Activated T-helper 1 cell treated with anti-CD3 and anti-CD28 coated beads, Interleukin-12 subunit alpha, Interleukin-12 subunit beta, Interleukin-2, Interleukin-4 antibody, amounts not matched to agents 30 ng/mL and 10 ng/mL and 1 ng/mL, durations not matched to agents 14 hours and 24 hours and 36 hours (primary cell): ENCODE measurements at regions of chr20 and their contacts with region 1.

Region 1: DNA sequence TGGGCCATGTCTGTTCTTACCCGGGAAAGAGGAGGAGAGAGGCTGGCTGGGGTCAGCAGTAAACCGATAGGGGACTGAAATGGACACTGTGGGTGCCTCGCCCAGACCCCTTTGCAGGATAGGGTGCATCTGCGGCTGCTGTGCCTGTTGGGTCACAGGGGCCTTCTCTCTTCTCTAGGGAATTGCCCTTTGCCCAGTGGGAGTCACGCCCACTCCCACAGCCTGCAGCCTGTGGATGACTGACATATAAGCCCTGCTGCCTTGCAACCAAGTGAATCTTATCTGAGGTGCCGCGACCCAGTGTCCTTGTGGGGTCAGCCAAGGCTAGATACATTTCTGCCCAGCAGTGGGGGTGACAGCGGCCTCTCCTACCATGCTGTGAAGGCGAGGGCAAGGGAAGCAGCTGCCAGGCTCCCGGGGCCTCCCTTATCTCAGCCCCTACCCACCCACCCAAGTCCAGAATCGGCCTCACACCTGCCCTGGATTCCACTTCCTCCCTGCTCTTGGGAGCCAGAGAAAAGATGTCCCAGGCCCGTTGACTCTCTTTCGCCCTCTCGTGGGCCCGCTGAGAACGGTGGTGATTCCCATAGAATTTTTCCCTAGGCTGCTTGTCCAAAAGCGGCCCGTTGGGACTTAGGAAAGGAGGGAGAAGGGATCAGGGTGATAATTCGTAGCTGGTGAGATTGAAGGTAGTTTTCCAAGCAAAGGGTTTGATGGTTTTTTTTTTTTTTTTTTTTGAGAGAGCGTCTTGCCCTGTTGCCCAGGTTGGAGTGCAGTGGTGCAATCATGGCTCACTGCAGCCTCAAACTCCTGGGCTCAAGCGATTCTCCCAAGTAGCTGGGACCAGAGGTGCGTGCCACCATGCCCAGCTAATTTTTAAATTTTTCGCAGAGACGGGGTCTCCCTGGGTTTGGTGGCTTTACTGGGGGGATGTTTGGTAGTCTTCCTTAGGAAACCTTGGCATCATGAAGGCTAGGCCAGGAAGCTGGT is 76.4 kb upstream of the RNF24 start:
- DNase-seq: peak; percentile 34
- H3K4me3 Mint-ChIP-seq: no peak overlapping the region
- H3K27ac Mint-ChIP-seq: no peak overlapping the region
- H3K4me1 Mint-ChIP-seq: peaks cover 10% of the 10 kb centered on the region
- H3K27me3 Mint-ChIP-seq: peaks cover 14% of the 10 kb centered on the region

Region 2: DNA sequence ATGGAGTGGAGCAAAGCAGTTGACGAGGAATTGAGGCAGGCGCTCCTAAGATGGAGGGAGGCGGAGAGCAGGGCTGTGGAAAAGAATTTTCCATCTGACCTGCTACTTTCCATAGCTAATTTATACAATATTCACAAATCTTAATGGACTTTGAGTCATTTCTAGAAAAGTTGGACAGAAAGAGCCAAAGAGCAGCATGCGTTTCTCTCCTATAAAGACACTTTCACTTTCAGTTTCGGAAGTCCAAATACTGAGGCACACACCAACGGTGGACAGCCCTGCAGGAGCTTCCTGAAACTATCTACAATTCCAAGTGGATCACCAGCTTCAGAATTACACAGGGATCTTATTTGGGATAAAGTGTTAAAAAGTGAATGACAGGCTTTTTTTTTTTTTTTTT is 159.1 kb before region 1 on chr20:
- intact Hi-C with region 1: no loop called
- DNase-seq: no peak
- H3K4me3 Mint-ChIP-seq: peak overlapping the region; percentile 26
- H3K27ac Mint-ChIP-seq: peak overlapping the region; percentile 44
- H3K4me1 Mint-ChIP-seq: peaks cover 30% of the 10 kb centered on the region
- H3K27me3 Mint-ChIP-seq: no peaks in the 10 kb centered on the region

Region 3: GRCh38 chr20:3997446-3997845 is 94.3 kb before region 1 on chr20:
- intact Hi-C with region 1: no loop called
- DNase-seq: no peak
- H3K4me3 Mint-ChIP-seq: no peak overlapping the region
- H3K27ac Mint-ChIP-seq: no peak overlapping the region
- H3K4me1 Mint-ChIP-seq: peaks cover 51% of the 10 kb centered on the region
- H3K27me3 Mint-ChIP-seq: no peaks in the 10 kb centered on the region

Region 4: GRCh38 chr20:4014031-4014474 is 77.7 kb before region 1 on chr20:
- intact Hi-C with region 1: loop called (anchors 1 kb)
- DNase-seq: no peak
- H3K4me3 Mint-ChIP-seq: peak overlapping the region; percentile 87
- H3K27ac Mint-ChIP-seq: peak overlapping the region; percentile 78
- H3K4me1 Mint-ChIP-seq: peaks cover 57% of the 10 kb centered on the region
- H3K27me3 Mint-ChIP-seq: peaks cover 4% of the 10 kb centered on the region

Region 5: DNA sequence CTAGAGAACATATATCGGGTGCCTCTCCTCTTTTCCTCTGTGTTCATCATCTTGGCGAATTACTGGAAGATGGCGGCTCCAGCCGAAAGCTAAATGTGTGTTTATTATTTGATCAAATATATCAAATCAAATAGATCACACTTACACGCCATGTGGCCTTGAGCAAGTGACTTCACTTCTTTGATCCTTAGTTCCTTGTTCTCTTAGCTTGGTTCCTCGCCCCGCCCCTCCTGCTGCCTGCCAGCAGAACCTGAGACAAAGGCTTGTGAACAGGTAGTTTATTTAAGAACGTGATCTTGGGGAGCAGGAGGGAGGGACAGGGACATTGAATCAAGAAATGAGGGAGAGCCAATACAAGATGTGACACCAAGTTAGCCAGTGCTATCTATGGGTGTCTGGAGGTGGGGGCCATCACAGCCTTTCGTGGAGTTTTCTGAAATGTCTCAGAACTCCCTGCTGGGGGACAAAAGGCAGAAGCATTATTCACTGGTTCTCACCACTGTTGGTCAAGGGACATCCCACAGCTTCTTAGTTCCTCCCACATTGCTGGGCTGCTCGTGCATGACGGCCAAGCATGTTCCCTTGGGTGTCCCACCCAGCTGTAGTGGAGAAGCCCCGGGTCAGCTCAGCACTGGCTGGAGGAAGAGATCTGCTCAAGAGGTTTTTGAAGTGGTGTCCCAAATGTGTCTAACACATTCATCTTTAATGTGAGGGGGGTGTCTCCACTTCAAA is 31.6 kb before region 1 on chr20:
- intact Hi-C with region 1: no loop called
- DNase-seq: no peak
- H3K4me3 Mint-ChIP-seq: no peak overlapping the region
- H3K27ac Mint-ChIP-seq: no peak overlapping the region
- H3K4me1 Mint-ChIP-seq: peaks cover 46% of the 10 kb centered on the region
- H3K27me3 Mint-ChIP-seq: peaks cover 5% of the 10 kb centered on the region

Region 6: DNA sequence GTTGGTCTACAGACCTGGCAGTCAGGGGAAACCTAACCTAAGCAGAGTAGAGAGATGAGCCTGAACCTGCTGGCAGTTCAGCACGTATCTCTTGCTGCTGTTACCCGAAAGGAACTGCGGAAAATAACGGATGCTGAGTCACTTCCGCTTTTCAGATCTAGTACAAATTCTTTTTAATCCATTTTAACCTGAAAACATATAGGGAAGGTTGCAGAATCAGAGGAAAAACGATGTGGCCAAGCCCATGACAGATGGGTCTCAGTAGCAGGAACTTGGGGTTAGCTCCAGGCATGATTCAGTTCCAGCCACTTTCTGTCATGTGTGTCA is 278.0 kb after region 1 on chr20:
- intact Hi-C with region 1: no loop called
- DNase-seq: peak; percentile 36
- H3K4me3 Mint-ChIP-seq: peak overlapping the region; percentile 36
- H3K27ac Mint-ChIP-seq: peak overlapping the region; percentile 92
- H3K4me1 Mint-ChIP-seq: peaks cover 43% of the 10 kb centered on the region
- H3K27me3 Mint-ChIP-seq: no peaks in the 10 kb centered on the region